Esophagus muscularis mucosa (tissue), 4 donors: ENCODE measurements at regions of chr12 and their contacts with region 1.

Region 1: DNA sequence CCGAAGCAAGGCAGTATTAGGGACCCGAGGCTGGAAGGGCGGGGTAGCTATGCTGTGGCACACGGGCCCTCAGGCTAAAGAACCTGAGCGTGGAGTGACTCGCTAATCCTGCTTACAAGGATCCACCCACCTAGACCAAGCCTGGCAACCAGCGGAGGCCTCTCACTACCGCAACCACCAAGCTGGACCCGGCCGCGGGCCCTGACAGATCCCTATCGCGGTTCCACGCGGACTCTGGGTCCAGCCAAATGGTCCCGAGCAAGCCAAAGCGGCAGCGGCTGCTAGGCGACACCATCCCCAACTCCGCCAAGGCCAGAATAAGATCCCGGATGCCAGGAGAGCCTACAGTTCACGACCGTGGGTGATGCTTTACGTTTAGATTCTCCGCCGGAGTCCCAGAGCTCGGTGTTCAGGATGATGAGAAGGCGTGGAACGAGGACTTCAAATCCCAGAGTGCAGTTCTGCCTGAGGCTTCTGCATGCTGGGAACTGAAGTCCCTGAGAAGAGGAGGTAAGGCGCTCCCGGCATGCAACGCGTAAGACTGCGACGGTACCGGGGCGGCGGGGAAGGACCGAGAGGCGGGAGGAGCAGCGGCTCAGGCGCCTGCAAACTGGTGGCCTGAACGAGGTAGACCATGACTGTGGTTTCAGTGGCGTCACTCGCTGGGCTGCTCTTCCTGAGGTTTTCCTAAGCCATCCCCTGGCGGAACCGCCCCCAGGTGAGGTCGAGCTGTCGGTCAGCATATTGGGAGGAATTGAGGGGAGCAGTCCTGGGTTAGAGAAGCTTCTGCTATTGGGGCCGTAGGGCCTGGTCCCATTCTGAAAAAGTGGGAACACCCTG is at the starts of genes CEP290 and TMTC3:
- DNase-seq: peak; percentile 98
- H3K4me3 ChIP-seq: peak within 1 kb of the TSS; percentile 80 to 86 (median 84)
- H3K27ac ChIP-seq: peak within 1 kb of the TSS; percentile 79 to 85 (median 80)
- H3K4me1 ChIP-seq: peaks cover 4 to 37% (median 31%) of the 10 kb centered on the region in 4 donors
- H3K27me3 ChIP-seq: no peaks in the 10 kb centered on the region
- CTCF ChIP-seq: no peak
- EP300 ChIP-seq: no peak
- POLR2A ChIP-seq: no peak
- total RNA-seq, gene CEP290: 8.1 to 18.1 (median 13.6) TPM
- total RNA-seq, gene TMTC3: 16.9 to 22.2 (median 18.3) TPM

Region 2: GRCh38 chr12:87853448-87854003 is 288.5 kb before region 1 on chr12:
- intact Hi-C with region 1: no loop called
- DNase-seq: no peak
- H3K4me3 ChIP-seq: no peak overlapping the region
- H3K27ac ChIP-seq: no peak overlapping the region
- H3K4me1 ChIP-seq: no peaks in the 10 kb centered on the region
- H3K27me3 ChIP-seq: no peaks in the 10 kb centered on the region
- CTCF ChIP-seq: no peak
- EP300 ChIP-seq: no peak
- POLR2A ChIP-seq: no peak

Region 3: DNA sequence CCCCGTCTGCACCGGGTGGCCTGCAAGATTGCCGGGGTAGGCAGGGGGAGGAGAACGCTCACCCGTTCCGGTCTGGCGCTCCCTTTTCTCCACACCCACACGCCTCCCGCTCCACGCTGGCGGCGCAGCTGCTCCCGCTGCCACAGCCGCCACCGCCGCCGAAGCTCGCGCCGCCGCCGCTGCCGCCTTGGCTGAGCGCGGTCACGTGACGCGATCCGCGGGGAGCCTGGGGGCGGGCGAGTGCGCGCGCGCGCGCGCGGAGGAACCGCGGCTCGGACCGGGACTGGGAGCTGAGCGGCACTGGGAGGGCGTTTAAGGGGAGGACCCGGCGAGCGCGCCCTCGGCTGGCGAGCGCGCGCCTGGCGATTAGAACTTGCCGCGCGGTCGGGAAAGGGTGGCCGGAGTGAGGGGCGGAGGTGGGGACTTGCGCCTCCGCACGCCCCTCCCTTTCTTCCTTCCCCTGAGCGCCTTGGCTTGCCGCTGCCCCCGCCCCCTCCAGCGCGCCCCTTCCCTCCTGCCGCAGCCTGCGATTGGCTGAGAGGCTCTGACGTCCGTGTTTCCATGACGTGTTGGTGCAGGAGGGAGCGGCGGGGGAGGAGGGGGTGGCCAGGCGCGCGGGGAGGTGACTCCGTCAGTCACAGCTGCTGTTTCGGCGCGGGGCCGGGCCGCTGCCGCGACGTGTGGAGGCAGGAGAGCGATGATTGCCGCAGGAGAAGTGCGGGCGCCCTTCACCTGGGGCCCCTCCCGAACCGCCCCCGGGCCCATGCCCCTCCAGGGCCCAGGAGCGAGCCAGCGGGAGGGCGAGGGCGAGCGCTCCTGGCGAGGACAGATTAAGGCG is 1567.4 kb after region 1 on chr12:
- intact Hi-C with region 1: loop called (anchors 5 kb)
- DNase-seq: peak; percentile 100
- H3K4me3 ChIP-seq: peak overlapping the region; percentile 72 to 97 (median 90)
- H3K27ac ChIP-seq: peak overlapping the region; percentile 95 to 99 (median 98)
- H3K4me1 ChIP-seq: peaks cover 13 to 35% (median 19%) of the 10 kb centered on the region in 4 donors
- H3K27me3 ChIP-seq: no peaks in the 10 kb centered on the region
- CTCF ChIP-seq: no peak
- EP300 ChIP-seq: peak; percentile 83
- POLR2A ChIP-seq: peak; percentile 95